ENCODE measurements at regions of chr7 and their contacts with region 1.

Region 1: DNA sequence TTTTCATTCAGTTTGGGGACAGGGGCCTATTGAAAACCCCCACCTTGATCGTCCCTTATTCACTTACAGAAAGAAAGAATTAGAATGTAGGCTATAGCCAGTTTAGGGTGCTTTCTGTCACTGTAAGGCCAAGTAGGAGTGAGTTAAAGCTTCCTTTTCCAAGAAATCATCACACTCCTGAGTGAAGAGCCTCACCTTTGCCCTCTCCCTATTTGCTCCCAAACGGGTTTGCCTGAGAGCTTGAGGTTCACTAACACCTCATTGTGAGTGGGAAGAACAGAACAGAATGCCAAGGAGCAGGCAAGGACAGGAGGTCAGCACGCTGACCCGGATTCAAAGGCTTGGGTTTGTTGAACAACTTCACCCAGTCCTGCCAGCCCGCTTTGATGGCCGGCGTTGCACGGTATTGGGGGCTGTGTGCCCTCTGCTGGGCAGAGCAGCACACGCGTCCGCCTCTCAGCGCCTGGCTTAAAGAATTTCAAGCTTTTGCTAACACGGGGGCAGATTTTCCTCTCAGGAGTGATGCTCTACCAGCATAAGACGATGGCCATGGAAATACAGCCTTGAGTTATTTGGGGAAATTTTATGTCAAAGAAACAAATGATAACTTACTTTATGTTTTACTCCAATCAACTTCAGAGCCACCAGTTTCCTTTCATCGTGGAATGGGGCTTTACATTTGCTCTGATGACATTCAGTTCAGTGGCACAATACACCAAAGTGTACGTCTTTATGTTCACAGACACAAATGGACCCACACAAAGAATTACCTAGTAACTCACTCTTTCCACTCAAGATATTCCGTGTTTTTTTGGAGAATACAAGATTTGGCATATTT is 470.0 kb downstream of the SUGCT start:
- DNase-seq: peak; percentile 81

Region 2: GRCh38 chr7:40329601-40330153 is 275.1 kb before region 1 on chr7:
- in situ Hi-C with region 1: loop called (anchors 25 kb)
- DNase-seq: peak; percentile 82

Region 3: GRCh38 chr7:40403703-40404476 is 200.9 kb before region 1 on chr7:
- in situ Hi-C with region 1: no loop called
- DNase-seq: no peak